PC-3 (cell line): ENCODE measurements at regions of chr4 and their contacts with region 1.

Region 1: GRCh38 chr4:77697860-77698590 is 92.4 kb downstream of the CXCL13 start:
- DNase-seq: peak; percentile 72
- ATAC-seq: peak; percentile 68
- H3K4me3 ChIP-seq: no peak overlapping the region
- H3K27ac ChIP-seq: no peak overlapping the region
- H3K4me1 ChIP-seq: peaks cover 27% of the 10 kb centered on the region
- H3K27me3 ChIP-seq: no peaks in the 10 kb centered on the region
- CTCF ChIP-seq: peak; percentile 75

Region 2: GRCh38 chr4:77473509-77473908 is 224.5 kb before region 1 on chr4:
- CTCF ChIA-PET with region 1: interaction called, 5 read pairs
- POLR2A ChIA-PET with region 1: no interaction called
- intact Hi-C with region 1: loop called (anchors 5 kb)
- DNase-seq: peak; percentile 53
- ATAC-seq: no peak
- H3K4me3 ChIP-seq: no peak overlapping the region
- H3K27ac ChIP-seq: no peak overlapping the region
- H3K4me1 ChIP-seq: no peaks in the 10 kb centered on the region
- H3K27me3 ChIP-seq: no peaks in the 10 kb centered on the region
- CTCF ChIP-seq: peak; percentile 58

Region 3: DNA sequence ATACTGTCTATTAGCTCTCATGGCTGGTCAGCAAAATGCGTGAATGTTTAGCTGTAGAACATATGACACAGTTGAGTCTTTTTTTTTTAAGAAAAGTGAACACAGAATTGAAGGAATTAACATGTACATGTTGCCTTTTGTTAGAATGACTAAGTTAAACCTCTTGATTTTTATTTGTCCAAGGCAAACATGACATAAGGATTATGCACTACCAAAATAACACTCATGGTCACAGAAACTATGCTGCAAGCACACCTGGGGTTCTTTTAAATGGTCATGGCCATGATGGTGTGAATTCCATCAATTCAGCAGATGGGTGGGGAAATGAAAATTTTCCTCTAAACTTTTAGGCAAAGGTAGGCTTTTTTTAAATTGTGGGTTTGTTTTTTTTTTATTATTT is 172.5 kb before region 1 on chr4:
- CTCF ChIA-PET with region 1: interaction called, 11 read pairs
- POLR2A ChIA-PET with region 1: no interaction called
- intact Hi-C with region 1: no loop called
- DNase-seq: peak; percentile 67
- ATAC-seq: peak; percentile 87
- H3K4me3 ChIP-seq: no peak overlapping the region
- H3K27ac ChIP-seq: peak overlapping the region; percentile 68
- H3K4me1 ChIP-seq: peaks cover 22% of the 10 kb centered on the region
- H3K27me3 ChIP-seq: no peaks in the 10 kb centered on the region
- CTCF ChIP-seq: no peak

Region 4: GRCh38 chr4:77618383-77619122 is 79.5 kb before region 1 on chr4:
- CTCF ChIA-PET with region 1: no interaction called
- POLR2A ChIA-PET with region 1: no interaction called
- intact Hi-C with region 1: loop called (anchors 1 kb)
- DNase-seq: peak; percentile 83
- ATAC-seq: peak; percentile 95
- H3K4me3 ChIP-seq: no peak overlapping the region; the same call in 1 of the 2 replicates
- H3K27ac ChIP-seq: no peak overlapping the region
- H3K4me1 ChIP-seq: peaks cover 8% of the 10 kb centered on the region; the same call in 1 of the 2 replicates
- H3K27me3 ChIP-seq: no peaks in the 10 kb centered on the region; the same call in 1 of the 2 replicates
- CTCF ChIP-seq: peak; percentile 83

Region 5: DNA sequence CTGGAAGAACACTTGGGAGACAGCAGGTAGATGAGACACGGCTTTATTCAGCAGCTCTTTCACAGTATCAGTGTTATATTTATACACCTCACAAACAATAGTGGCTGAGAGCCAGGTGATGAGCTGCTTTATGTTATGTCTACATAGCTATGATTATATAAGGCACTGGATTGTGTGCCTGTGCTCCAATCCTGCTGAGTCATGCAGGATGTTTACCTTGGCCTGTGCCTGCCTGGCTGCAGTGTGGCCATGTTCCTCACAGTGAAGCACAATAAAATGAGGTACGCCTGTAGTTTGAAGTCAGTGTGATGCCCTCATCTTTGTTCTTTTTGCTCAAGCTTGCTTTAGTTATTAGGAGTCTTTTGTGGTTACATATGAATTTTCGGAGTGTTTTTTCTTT is 61.1 kb before region 1 on chr4:
- CTCF ChIA-PET with region 1: interaction called, 4 read pairs
- POLR2A ChIA-PET with region 1: no interaction called
- intact Hi-C with region 1: loop called (anchors 1 kb)
- DNase-seq: peak; percentile 95
- ATAC-seq: peak; percentile 100
- H3K4me3 ChIP-seq: no peak overlapping the region
- H3K27ac ChIP-seq: peak overlapping the region; percentile 59
- H3K4me1 ChIP-seq: peaks cover 13% of the 10 kb centered on the region
- H3K27me3 ChIP-seq: no peaks in the 10 kb centered on the region
- CTCF ChIP-seq: no peak

Region 6: GRCh38 chr4:77773101-77773500 is 75.1 kb after region 1 on chr4:
- CTCF ChIA-PET with region 1: no interaction called
- POLR2A ChIA-PET with region 1: no interaction called
- intact Hi-C with region 1: no loop called
- DNase-seq: no peak
- ATAC-seq: no peak
- H3K4me3 ChIP-seq: no peak overlapping the region
- H3K27ac ChIP-seq: no peak overlapping the region
- H3K4me1 ChIP-seq: no peaks in the 10 kb centered on the region
- H3K27me3 ChIP-seq: no peaks in the 10 kb centered on the region
- CTCF ChIP-seq: no peak